GM10248 (cell line): ENCODE measurements at regions of chr1 and their contacts with region 1.

Region 1: DNA sequence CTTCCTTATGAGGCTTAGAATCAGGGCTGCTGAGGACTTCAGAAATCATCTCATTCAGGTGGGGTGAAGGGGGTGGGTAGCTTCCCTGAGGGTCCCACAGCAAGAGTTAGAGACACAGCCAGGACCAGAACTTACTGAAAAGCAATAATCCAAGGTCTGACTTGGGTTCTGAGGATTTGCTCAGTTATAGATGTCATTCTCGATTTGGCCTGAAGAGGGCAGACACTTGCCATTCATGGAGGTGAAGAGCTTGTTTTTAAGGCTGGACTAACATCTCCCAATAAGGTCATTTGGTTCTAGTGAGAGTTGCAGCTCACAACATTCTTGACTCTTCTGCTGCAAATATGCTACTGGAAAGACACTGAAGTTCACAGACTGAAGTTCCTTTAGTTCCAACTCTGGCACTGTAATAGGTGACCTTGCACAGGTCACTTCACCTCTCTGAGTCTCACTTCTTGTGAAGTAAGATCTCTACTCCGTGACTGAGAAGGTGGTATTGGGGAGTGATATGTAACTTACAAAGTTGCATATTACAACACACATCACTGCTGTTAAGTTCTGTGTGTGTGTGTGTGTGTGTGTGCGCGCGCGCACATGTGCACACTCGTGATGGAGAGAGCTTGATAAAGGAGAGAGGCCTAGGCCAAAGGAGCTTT is 69.8 kb upstream of the DIRAS3 start:
- DNase-seq: peak; percentile 55
- CTCF ChIP-seq: peak; percentile 76

Region 2: GRCh38 chr1:68087184-68087583 is 33.1 kb before region 1 on chr1:
- CTCF ChIA-PET with region 1: no interaction called
- POLR2A ChIA-PET with region 1: no interaction called
- DNase-seq: no peak
- CTCF ChIP-seq: no peak

Region 3: DNA sequence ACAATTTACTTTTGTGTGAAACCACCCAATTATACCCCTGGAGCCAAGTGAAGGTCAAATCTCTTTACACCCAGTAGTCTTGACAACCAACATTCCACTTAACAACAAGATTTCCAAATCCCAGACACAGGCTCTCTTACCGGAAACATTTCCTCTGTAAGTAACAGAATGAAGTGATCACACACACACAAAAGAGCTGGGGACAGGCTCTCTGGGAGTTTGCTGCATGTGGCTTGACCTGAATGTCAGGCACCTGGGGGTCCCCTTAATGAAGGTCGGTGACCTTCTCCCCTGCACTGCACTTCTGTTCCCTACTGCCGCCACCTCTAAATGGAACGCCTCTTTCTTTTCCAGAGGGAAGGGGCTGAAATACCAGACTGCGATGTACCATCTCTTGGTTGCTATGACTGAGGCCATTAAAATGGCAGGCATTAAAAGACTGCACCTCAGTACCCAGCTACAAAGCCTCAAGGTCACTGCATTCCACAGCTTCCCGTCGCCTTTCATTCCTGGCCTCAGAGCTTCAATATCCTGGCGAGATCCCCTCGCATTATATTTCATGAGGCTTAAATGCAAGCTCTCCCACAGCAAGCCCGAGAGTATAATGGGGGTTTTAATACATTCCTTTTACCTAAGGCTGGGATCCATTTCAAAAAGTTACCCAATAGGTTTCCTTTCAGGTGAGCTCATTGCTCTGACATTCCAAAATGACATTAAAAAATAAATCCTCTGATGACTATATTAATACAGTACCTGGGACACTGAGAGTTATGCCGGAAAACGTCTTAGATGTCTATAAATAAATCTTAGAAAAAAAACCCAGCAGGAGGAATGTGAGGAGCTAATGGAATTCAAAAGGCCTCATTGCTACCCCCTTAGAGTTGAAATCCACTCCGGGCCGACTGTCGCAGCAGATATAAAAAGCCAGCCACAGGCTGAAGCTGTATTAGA is 21.1 kb after region 1 on chr1:
- CTCF ChIA-PET with region 1: interaction called, 11 read pairs
- POLR2A ChIA-PET with region 1: no interaction called
- DNase-seq: no peak
- CTCF ChIP-seq: no peak

Region 4: GRCh38 chr1:68339471-68339870 is 219.2 kb after region 1 on chr1:
- CTCF ChIA-PET with region 1: interaction called, 112 read pairs
- POLR2A ChIA-PET with region 1: no interaction called
- DNase-seq: no peak
- CTCF ChIP-seq: no peak

Region 5: DNA sequence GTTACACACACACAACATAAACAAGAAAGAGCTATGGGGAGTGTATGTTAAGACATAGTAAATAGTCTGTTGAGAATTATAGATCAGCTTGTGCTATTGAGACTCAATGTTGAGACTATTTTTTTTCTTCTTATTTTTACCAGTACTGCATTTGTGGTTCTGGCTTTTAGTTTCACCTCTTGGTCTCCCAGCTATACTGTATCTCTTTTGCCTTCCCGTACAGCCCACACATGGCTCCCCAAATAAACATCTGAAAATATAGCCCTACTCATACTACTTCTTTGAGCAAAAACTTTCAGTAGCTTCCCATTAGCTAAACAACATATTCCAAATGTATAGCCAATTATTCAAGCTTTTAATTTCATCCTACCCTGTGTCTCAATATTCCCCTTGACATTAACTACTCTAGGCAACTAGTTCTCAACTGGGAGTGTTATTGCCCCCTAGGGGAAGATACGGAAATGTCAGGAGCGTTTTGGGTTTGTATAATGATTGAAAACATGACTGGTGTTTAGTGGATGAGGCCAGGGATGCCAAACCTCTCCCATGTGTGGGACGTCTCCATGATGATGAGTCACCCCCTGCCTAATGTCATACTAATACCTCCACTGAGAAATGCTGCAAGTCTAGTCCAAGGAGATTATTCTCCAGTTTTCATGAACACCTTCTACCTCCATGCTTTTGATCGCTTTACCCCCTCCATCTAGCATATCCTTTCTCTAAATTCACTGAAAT is 322.7 kb after region 1 on chr1:
- CTCF ChIA-PET with region 1: interaction called, 51 read pairs
- POLR2A ChIA-PET with region 1: no interaction called
- DNase-seq: peak; percentile 34
- CTCF ChIP-seq: peak; percentile 60